ENCODE measurements at regions of chr15 and their contacts with region 1.

Region 1: GRCh38 chr15:55897560-55898336 is 95.7 kb downstream of the NEDD4 start:
- DNase-seq: peak; percentile 76 to 91
- ATAC-seq: peak; percentile 86 to 93
- H3K4me3 ChIP-seq: 0 out of 3 replicates have a peak overlapping the region, but pooled peaks have one; percentile 3
- H3K27ac ChIP-seq: peak overlapping the region; percentile 93 to 96
- H3K4me1 ChIP-seq: peaks cover 86% of the 10 kb centered on the region
- CTCF ChIP-seq: peak; percentile 95
- EP300 ChIP-seq: peak in 1 of 2 experiments; percentile 8; a peak in 1 of 5 replicates
- POLR2A ChIP-seq: no peak
- RAD21 ChIP-seq: peak; percentile 84 to 88

Region 2: DNA sequence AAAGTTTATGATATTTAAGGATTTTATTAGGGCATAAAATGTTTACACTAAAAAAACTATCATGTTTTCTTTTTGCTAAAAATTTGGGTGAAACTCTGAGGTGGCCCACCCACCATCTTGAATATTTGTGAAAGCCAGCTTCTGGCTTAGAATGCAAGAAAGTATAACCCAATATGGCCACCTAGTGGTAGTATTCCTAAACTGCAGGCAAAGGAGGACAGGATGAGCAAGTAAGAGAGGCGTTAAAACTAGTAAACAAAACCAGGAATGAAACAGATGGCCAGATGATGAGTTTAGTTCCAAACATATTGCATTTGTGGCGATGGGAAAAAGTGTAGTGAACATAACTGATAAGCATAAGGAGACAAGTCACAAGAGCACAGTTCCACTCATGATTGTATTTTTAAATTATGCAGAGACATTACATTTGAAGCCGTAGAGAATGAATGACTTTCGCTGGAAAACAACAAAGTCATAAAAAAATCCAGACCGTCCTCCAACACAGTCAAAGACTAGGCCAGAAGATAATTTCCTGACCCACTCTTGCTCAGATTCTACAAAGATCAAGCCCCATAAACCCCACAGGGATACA is 51.5 kb before region 1 on chr15:
- CTCF ChIA-PET with region 1: interaction called, 14 read pairs
- POLR2A ChIA-PET with region 1: no interaction called
- DNase-seq: peak; percentile 71 to 85
- ATAC-seq: peak; percentile 74 to 87; a peak in 5 of 6 replicates
- H3K4me3 ChIP-seq: no peak overlapping the region
- H3K27ac ChIP-seq: no peak overlapping the region
- H3K4me1 ChIP-seq: no peaks in the 10 kb centered on the region
- CTCF ChIP-seq: peak; percentile 87
- EP300 ChIP-seq: no peak
- POLR2A ChIP-seq: no peak
- RAD21 ChIP-seq: peak; percentile 79 to 81

Region 3: DNA sequence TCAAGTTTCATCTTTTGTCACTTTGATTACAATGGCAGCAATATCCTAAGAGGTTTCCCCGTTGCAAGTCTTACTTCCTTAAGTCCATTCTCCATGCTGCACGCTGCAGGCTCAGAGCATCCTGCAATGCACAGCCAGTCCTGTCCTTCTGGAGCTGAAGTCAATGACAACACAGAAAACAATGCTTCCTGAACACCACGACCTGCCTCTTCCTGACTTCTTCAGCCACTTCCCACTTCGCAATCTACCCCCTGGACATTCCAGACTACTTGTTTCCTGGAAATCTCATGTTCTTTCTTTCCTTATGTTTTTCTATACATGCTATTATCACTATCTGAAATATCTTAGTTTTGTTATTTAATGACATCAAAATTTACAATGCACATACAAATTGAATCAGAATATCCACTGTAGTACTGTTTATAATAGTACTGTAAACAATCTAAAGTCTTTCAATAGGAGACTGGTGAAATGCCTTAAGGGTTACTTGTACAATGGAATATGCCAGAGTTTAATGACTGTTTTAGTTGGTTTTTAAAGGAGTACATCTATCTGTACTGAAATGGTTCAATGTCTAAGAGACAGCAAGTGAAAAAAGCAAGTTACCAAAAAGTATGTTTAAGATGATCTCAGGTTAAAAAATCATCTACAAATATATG is 41.1 kb before region 1 on chr15:
- CTCF ChIA-PET with region 1: interaction called, 12 read pairs
- POLR2A ChIA-PET with region 1: no interaction called
- DNase-seq: no peak
- ATAC-seq: peak in 1 of 2 experiments; percentile 36; a peak in 1 of 6 replicates
- H3K4me3 ChIP-seq: no peak overlapping the region
- H3K27ac ChIP-seq: no peak overlapping the region
- H3K4me1 ChIP-seq: peaks cover 6% of the 10 kb centered on the region; the same call in 1 of the 3 replicates
- CTCF ChIP-seq: no peak
- EP300 ChIP-seq: no peak
- POLR2A ChIP-seq: no peak
- RAD21 ChIP-seq: no peak

Region 4: DNA sequence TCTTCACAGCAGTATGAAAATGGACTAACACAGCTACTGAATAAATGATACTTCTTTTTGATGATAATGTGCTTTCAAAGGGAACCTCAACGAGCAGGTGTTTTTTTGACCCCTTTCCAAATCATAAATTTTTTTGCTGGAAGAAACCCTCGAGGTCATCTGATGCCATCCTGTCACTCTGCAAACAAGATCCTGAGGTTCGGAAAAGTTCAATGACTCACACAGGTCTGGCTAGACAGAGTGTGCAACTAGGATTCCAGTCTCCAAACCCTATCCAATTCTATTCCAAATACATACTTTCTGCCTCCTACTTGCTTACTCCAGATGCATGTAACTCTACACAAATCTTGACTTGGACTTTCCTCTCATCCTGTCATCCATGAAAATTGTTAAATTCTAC is 29.0 kb before region 1 on chr15:
- CTCF ChIA-PET with region 1: interaction called, 26 read pairs
- POLR2A ChIA-PET with region 1: interaction called, 8 read pairs
- DNase-seq: peak; percentile 43 to 75
- ATAC-seq: peak; percentile 88 to 94
- H3K4me3 ChIP-seq: no peak overlapping the region
- H3K27ac ChIP-seq: peak overlapping the region; percentile 67 to 75
- H3K4me1 ChIP-seq: peaks cover 72% of the 10 kb centered on the region
- CTCF ChIP-seq: no peak
- EP300 ChIP-seq: peak; percentile 49 to 56; a peak in 2 of 5 replicates
- POLR2A ChIP-seq: no peak
- RAD21 ChIP-seq: no peak

Region 5: GRCh38 chr15:55884223-55884622 is 13.5 kb before region 1 on chr15:
- CTCF ChIA-PET with region 1: interaction called, 25 read pairs
- POLR2A ChIA-PET with region 1: interaction called, 8 read pairs
- DNase-seq: no peak
- ATAC-seq: no peak
- H3K4me3 ChIP-seq: no peak overlapping the region
- H3K27ac ChIP-seq: peak overlapping the region in 1 of 2 experiments; percentile 39; a peak in 2 of 6 replicates
- H3K4me1 ChIP-seq: peaks cover 56% of the 10 kb centered on the region
- CTCF ChIP-seq: no peak
- EP300 ChIP-seq: no peak
- POLR2A ChIP-seq: no peak
- RAD21 ChIP-seq: no peak

Region 6: DNA sequence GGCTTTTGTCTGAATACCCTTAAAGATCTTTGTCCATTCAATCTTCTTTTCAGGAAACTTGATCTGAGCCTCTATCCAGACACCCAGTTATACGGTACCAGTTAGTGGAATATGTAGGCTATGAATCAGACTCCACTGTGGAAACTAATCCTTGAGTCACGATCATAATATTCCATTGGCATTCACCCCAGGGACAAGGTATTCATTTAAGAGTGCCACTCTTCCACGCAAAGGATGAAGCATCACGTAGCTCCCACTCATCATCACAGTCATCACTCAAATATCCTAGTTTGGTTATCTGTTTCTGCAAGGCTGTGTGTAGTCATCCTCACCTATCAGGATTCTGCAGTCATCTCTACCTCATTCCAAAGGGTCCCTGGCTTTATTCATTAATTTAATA is 10.0 kb after region 1 on chr15:
- CTCF ChIA-PET with region 1: interaction called, 51 read pairs
- POLR2A ChIA-PET with region 1: interaction called, 14 read pairs
- DNase-seq: peak; percentile 73 to 92
- ATAC-seq: peak; percentile 91 to 95
- H3K4me3 ChIP-seq: no peak overlapping the region; the same call in 2 of the 3 replicates
- H3K27ac ChIP-seq: peak overlapping the region; percentile 88 to 93
- H3K4me1 ChIP-seq: peaks cover 63% of the 10 kb centered on the region
- CTCF ChIP-seq: no peak
- EP300 ChIP-seq: peak; percentile 86 to 94; a peak in 4 of 5 replicates
- POLR2A ChIP-seq: no peak
- RAD21 ChIP-seq: 0 out of 5 replicates have a peak, but pooled peaks of 1 of the 2 experiments have one; percentile 23

Region 7: DNA sequence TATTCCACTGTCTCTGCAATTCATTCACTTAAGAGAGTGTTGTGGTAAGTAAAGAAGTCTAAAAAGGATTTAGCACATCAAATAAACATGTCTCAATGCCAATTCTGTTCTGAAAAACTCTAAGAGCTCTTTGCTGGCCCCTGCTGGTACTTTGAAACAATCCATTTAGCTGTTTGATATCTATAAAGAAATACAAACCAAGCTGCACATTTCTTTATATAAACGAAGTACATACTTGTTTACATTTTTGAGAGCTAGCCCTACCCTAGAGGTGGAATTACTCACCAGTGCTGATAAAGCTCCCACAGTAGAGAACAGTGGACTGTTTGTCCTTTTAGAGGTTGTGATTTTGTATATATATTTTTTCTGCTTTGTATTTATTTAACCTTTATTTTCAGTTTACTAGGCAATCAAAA is 20.1 kb after region 1 on chr15:
- CTCF ChIA-PET with region 1: interaction called, 87 read pairs
- POLR2A ChIA-PET with region 1: interaction called, 33 read pairs
- DNase-seq: peak; percentile 49 to 91
- ATAC-seq: peak; percentile 75 to 94
- H3K4me3 ChIP-seq: no peak overlapping the region
- H3K27ac ChIP-seq: peak overlapping the region; percentile 30 to 74; a peak in 4 of 6 replicates
- H3K4me1 ChIP-seq: peaks cover 17% of the 10 kb centered on the region; the same call in 2 of the 3 replicates
- CTCF ChIP-seq: peak; percentile 96
- EP300 ChIP-seq: no peak
- POLR2A ChIP-seq: no peak
- RAD21 ChIP-seq: peak; percentile 87 to 92